Prostate gland (tissue), 2 donors: ENCODE measurements at regions of chr5 and their contacts with region 1.

Region 1: GRCh38 chr5:88729084-88729828 is 153.7 kb downstream of the MEF2C start:
- DNase-seq: peak; percentile 68
- H3K4me3 ChIP-seq: no peak overlapping the region
- H3K27ac ChIP-seq: no peak overlapping the region
- H3K4me1 ChIP-seq: no peaks in the 10 kb centered on the region
- H3K27me3 ChIP-seq: no peaks in the 10 kb centered on the region
- CTCF ChIP-seq: peak; percentile 55 to 81 (median 78)
- POLR2A ChIP-seq: no peak

Region 2: GRCh38 chr5:88707216-88707965 is 21.9 kb before region 1 on chr5:
- intact Hi-C with region 1: no loop called
- DNase-seq: no peak
- H3K4me3 ChIP-seq: no peak overlapping the region
- H3K27ac ChIP-seq: no peak overlapping the region
- H3K4me1 ChIP-seq: no peaks in the 10 kb centered on the region
- H3K27me3 ChIP-seq: no peaks in the 10 kb centered on the region
- CTCF ChIP-seq: no peak
- POLR2A ChIP-seq: no peak

Region 3: DNA sequence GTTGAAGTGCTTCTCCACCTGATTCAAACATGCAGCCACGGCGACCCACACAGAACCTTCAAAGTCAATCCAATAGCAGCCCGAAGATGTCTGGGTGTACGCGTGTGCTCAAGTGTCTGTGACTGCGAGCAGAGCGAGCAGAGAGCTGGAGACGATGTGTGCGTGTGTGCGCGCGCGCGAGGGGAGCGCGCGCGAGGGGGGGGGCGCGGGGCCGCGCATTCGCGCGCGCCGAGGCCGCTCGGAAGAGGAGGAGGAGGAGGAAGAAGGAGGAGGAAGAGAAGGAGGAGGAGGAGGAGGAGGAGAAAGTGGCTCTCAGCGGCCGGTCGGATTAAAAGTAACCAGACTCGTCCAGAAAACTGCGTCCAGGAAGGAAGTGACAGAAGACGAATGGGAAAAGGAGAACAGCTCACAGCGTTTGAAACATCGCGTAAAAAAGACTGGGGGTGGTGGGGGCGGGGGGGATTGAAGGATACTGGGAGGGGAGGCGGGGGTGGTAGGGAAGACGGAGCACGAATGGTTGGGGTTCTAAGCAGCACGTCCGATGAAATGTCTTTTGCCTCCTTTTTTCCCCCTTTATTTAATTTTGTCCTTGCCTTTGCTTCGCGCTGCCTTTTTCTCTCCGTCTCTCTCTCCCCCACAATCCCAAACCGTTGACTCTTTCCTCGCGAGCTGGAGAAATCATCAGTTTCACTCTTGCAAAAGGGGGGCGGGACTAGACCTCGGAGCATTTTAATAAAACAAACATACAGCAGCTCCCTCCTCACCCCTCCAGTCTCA is 154.0 kb after region 1 on chr5 and contains the start of gene MEF2C:
- intact Hi-C with region 1: loop called (anchors 5 kb)
- DNase-seq: peak; percentile 51
- H3K4me3 ChIP-seq: peak within 1 kb of the TSS; percentile 42 to 53
- H3K27ac ChIP-seq: peak within 1 kb of the TSS; percentile 74 to 82
- H3K4me1 ChIP-seq: no peaks in the 10 kb centered on the region
- H3K27me3 ChIP-seq: no peaks in the 10 kb centered on the region
- CTCF ChIP-seq: no peak
- POLR2A ChIP-seq: peak; percentile 74
- total RNA-seq, gene MEF2C: 13.9 to 44.0 TPM

Region 4: DNA sequence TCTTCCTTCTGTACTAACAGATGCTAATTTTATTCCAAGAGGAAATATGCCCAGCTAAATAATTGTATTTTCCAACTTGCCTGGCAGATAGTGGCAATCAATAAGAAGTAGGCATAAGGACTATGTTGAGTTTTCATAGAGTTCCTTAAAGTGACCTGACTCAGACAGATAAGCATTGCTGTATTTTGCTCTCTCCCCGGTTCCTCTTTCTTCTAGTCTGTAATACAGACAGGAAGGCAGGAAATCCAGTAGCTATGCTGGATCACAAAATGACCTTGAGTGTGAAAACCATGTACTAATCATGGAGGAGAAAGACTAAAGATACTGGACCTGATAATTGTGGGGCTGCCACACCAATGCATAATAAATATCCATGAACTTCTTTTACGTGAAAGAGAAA is 978.6 kb after region 1 on chr5:
- intact Hi-C with region 1: no loop called
- DNase-seq: no peak
- H3K4me3 ChIP-seq: no peak overlapping the region
- H3K27ac ChIP-seq: no peak overlapping the region
- H3K4me1 ChIP-seq: no peaks in the 10 kb centered on the region
- H3K27me3 ChIP-seq: no peaks in the 10 kb centered on the region
- CTCF ChIP-seq: no peak
- POLR2A ChIP-seq: no peak

Region 5: DNA sequence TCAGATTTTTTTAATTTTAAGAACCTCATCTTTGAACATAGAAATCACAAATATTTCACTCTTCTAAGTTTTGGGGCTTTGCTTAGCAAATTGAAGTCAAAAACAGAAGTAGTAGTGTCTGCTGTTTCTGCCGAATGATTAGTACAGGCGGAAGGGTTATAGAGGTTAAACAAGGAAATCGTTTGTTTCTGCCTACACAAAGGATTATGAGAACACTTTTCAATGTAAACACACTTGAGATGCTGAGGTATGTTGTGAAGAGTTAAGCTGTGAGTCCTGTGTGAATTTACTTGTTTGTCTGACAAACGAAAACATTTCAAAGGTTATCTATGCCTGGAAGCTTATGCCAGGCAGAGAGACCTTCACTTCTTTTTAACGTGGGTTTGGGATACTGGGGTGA is 1455.5 kb after region 1 on chr5:
- intact Hi-C with region 1: loop called (anchors 10 kb)
- DNase-seq: no peak
- H3K4me3 ChIP-seq: no peak overlapping the region
- H3K27ac ChIP-seq: no peak overlapping the region
- H3K4me1 ChIP-seq: no peaks in the 10 kb centered on the region
- H3K27me3 ChIP-seq: no peaks in the 10 kb centered on the region
- CTCF ChIP-seq: no peak
- POLR2A ChIP-seq: no peak

Region 6: DNA sequence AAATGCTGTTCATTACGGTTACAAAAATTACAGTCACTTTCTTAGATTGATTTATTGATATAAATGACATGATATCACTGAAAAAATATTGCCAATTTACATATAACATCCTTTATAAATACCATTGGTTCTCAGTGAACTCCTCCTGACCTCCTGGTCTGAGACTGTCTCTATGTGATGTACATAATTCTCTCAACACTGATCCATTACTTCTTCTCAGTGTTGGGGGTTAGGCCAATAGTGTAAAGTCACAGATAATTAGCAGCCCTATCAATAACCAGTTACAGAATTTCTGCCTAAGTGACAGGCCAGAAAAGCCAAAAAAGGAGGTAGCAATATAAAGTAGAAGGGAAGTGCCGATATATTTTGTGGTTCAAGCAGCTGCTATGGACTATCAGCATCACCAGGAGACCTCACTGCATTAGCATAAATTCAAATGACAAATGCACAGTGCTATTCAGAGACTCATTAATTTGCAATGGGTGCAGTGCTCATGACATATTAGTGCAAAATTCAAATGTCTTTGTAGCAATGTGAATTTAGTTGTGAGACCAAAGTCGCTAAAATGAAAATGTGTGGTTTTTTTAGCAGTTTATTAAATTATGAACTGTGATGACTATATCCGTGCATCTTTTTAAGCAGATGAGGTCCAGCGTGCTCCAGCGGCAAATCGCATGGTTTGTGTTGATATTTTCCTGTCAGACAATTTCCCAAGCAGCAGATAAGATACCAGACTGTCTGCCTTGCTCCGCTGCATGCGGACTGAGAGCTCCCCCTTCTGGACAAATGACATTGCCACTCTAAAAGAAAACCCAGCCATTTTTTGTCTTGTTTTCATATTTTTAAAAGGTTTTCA is 1535.7 kb after region 1 on chr5:
- intact Hi-C with region 1: loop called (anchors 2 kb)
- DNase-seq: peak; percentile 47
- H3K4me3 ChIP-seq: no peak overlapping the region
- H3K27ac ChIP-seq: no peak overlapping the region
- H3K4me1 ChIP-seq: no peaks in the 10 kb centered on the region
- H3K27me3 ChIP-seq: no peaks in the 10 kb centered on the region
- CTCF ChIP-seq: peak; percentile 62 to 79 (median 77)
- POLR2A ChIP-seq: no peak

Region 7: GRCh38 chr5:90386099-90386710 is 1656.9 kb after region 1 on chr5:
- intact Hi-C with region 1: loop called (anchors 10 kb)
- DNase-seq: no peak
- H3K4me3 ChIP-seq: no peak overlapping the region
- H3K27ac ChIP-seq: no peak overlapping the region
- H3K4me1 ChIP-seq: no peaks in the 10 kb centered on the region
- H3K27me3 ChIP-seq: no peaks in the 10 kb centered on the region
- CTCF ChIP-seq: peak in 3 of 4 experiments; percentile 36 to 54 (median 37)
- POLR2A ChIP-seq: no peak